ENCODE measurements at regions of chr17 and their contacts with region 1.

Region 1: GRCh38 chr17:28552246-28552999 is at the start of gene UNC119:
- DNase-seq: peak; percentile 86 to 98 (median 97)
- ATAC-seq: peak; percentile 97
- H3K4me3 ChIP-seq: peak within 1 kb of the TSS; percentile 75
- H3K27ac ChIP-seq: peak within 1 kb of the TSS; percentile 67; the same call in 1 of the 3 replicates
- H3K4me1 ChIP-seq: peaks cover 13 to 27% of the 10 kb centered on the region in 2 experiments; a peak in 4 of 5 replicates
- H3K27me3 ChIP-seq: no peaks in the 10 kb centered on the region
- CTCF ChIP-seq: no peak
- EP300 ChIP-seq: no peak
- POLR2A ChIP-seq: peak; percentile 66
- RAD21 ChIP-seq: no peak
- polyA plus RNA-seq, gene UNC119: 0.37 to 1.0 TPM

Region 2: GRCh38 chr17:28509789-28510188 is 42.6 kb before region 1 on chr17:
- CTCF ChIA-PET with region 1: no interaction called
- POLR2A ChIA-PET with region 1: no interaction called
- in situ Hi-C with region 1: no loop called
- intact Hi-C with region 1: loop called (anchors 5 kb)
- DNase-seq: no peak
- ATAC-seq: no peak
- H3K4me3 ChIP-seq: no peak overlapping the region
- H3K27ac ChIP-seq: no peak overlapping the region
- H3K4me1 ChIP-seq: peaks cover 0 to 20% of the 10 kb centered on the region in 2 experiments; a peak in 2 of 5 replicates
- H3K27me3 ChIP-seq: peaks cover 31 to 76% of the 10 kb centered on the region in 2 experiments
- CTCF ChIP-seq: no peak
- EP300 ChIP-seq: no peak
- POLR2A ChIP-seq: no peak
- RAD21 ChIP-seq: no peak

Region 3: DNA sequence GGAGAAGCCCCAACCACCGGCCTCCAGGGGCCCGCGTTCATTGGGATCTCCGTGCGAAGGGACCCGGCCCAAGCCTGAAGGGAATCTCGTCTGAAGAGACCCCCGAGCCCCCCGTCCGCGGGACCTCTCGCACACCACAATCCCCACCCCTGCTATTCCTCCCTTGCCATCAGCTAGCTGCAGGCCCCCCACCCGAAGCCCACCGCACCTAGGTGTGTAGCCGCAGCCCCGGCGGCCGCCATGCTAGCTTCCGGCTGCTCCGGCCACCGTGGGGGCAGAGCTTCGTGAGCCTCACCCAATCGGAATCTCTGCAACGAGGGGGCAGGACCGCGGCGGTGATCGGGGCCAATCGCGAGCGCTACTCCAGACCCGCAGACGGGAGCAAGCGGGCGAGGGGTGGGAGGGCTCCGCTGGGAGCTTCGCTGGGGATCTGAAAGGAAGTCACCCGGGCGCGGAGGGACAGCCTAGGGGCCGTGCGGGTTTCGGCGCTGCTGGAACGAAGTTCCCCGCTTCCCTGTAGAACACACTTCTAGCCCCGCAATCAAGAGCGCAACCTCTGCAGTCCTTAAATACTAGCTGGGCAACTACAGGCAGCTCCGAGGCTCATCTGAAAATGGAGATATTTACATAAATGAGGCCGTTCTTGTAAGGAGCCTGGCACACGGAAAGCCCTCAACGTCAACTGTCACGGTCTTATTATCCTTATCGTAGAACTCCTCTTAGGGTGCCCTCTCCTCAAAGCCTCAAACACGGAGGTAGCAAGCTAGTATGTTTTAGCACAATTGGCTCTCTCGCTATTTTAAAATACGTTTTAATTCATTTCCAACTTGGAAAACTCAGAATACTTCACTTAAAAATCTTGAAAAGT is 19.1 kb after region 1 on chr17 and contains the start of gene PIGS:
- CTCF ChIA-PET with region 1: no interaction called
- POLR2A ChIA-PET with region 1: interaction called, 14 read pairs
- in situ Hi-C with region 1: no loop called
- intact Hi-C with region 1: no loop called
- DNase-seq: peak; percentile 95 to 98 (median 96)
- ATAC-seq: peak; percentile 96
- H3K4me3 ChIP-seq: peak within 1 kb of the TSS; percentile 82
- H3K27ac ChIP-seq: peak within 1 kb of the TSS; percentile 83
- H3K4me1 ChIP-seq: peaks cover 25 to 28% of the 10 kb centered on the region in 2 experiments; a peak in 4 of 5 replicates
- H3K27me3 ChIP-seq: no peaks in the 10 kb centered on the region
- CTCF ChIP-seq: no peak
- EP300 ChIP-seq: no peak
- POLR2A ChIP-seq: peak; percentile 91
- RAD21 ChIP-seq: no peak
- polyA plus RNA-seq, gene PIGS: 47.5 to 55.8 TPM

Region 4: GRCh38 chr17:28644985-28645939 is 92.8 kb after region 1 on chr17 and contains the start of gene BLTP2:
- CTCF ChIA-PET with region 1: no interaction called
- POLR2A ChIA-PET with region 1: no interaction called
- in situ Hi-C with region 1: no loop called
- intact Hi-C with region 1: no loop called
- DNase-seq: peak; percentile 98 to 99 (median 99)
- ATAC-seq: peak; percentile 97
- H3K4me3 ChIP-seq: peak within 1 kb of the TSS; percentile 83
- H3K27ac ChIP-seq: peak within 1 kb of the TSS; percentile 85
- H3K4me1 ChIP-seq: peaks cover 16 to 23% of the 10 kb centered on the region in 2 experiments
- H3K27me3 ChIP-seq: no peaks in the 10 kb centered on the region
- CTCF ChIP-seq: no peak
- EP300 ChIP-seq: no peak
- POLR2A ChIP-seq: peak; percentile 89
- RAD21 ChIP-seq: no peak
- polyA plus RNA-seq, gene BLTP2: 14.7 to 34.3 TPM